A549 (cell line): ENCODE measurements at regions of chr11 and their contacts with region 1.

Region 1: DNA sequence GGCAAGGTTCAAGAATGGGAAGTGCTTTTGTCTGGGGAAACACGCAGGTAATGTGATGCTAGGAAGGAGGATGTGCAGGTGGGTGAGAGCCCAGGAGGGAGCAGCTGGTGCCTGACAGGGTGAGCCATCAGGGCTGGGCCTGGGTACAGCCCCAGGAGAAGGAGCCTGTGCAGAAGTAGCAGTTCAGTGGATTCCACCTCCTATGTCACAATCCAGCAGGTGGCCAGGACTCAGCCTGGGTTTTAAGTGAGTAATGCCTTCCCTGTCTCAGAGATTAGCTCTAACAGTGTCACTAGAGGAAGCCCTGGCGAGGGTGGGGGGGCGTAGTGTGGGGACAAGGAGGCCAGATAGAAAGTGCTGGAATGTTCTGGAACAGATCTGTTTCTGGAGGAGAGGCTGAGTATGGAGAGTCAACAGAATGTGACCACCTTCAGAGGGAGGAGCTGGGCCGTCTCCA is 8.1 kb downstream of the RIC8A start:
- DNase-seq: no peak
- ATAC-seq: peak; percentile 20 to 42; a peak in 5 of 6 replicates
- H3K4me3 ChIP-seq: no peak overlapping the region
- H3K27ac ChIP-seq: no peak overlapping the region
- H3K4me1 ChIP-seq: peaks cover 3% of the 10 kb centered on the region; the same call in 2 of the 3 replicates
- CTCF ChIP-seq: no peak
- EP300 ChIP-seq: no peak
- POLR2A ChIP-seq: no peak
- RAD21 ChIP-seq: no peak

Region 2: GRCh38 chr11:200224-201003 is 15.2 kb before region 1 on chr11:
- CTCF ChIA-PET with region 1: no interaction called
- POLR2A ChIA-PET with region 1: no interaction called
- DNase-seq: no peak
- ATAC-seq: no peak
- H3K4me3 ChIP-seq: no peak overlapping the region
- H3K27ac ChIP-seq: no peak overlapping the region
- H3K4me1 ChIP-seq: peaks cover under 1% of the 10 kb centered on the region; the same call in 1 of the 3 replicates
- CTCF ChIP-seq: no peak
- EP300 ChIP-seq: no peak
- POLR2A ChIP-seq: no peak
- RAD21 ChIP-seq: no peak

Region 3: DNA sequence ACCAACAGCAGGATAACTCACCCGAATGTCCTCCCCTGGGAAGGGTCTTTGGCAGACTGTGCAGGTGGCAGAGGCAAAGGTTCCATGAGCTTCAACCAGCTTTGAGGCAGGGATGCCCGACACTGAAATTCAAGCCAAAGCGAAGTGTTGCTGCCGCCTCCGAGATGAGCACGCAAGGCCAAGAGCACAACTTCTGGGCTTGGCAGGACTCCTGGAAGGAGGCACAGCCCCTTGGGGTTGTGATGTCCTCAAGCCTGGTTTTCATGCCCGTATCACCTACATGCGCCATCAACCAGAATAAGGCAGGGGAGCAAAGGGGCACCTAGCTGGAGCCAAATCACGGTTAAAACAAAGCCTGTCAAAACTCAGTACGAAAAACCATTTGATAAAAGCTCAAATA is 14.8 kb after region 1 on chr11:
- CTCF ChIA-PET with region 1: interaction called, 11 read pairs
- POLR2A ChIA-PET with region 1: no interaction called
- DNase-seq: no peak
- ATAC-seq: no peak
- H3K4me3 ChIP-seq: no peak overlapping the region
- H3K27ac ChIP-seq: no peak overlapping the region
- H3K4me1 ChIP-seq: peaks cover 7% of the 10 kb centered on the region; the same call in 2 of the 3 replicates
- CTCF ChIP-seq: no peak
- EP300 ChIP-seq: no peak
- POLR2A ChIP-seq: no peak
- RAD21 ChIP-seq: no peak

Region 4: DNA sequence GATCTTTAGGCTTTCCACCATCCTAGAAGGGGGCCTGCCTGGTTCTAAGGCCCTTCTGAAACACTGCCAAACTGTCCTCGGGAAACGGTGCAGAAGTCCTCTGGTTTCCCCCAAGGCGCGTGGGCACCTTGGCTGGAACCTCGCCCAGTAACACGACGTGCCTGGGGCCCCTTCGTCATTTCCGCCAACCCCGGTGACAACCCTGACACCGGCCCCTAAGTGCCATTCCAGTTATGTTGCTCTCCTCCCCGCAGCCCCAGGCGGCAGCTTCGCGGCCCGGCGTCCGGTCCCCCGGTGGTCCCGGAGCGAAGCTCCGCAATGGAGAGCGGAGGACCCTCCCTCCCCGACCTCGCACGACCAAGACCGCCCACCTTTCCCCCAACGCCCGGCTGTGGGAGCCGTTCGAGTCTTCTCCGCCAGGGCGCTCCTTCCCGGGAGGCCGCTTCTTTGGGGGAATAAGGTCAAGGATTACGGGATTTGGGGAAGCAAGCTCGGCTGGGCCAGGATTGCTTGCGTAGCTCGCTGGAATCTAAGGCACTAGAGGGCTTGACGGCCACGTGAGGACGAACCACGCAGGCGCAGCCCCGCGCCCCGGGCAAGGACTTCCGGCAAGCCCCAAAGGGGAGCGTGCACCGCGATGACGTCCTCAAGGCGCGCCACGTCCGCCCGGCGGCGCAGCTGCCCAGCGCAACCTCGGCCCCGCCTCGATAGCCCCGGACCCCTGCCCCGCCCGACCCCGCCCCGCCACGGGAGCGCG is 290.8 kb after region 1 on chr11:
- CTCF ChIA-PET with region 1: no interaction called
- POLR2A ChIA-PET with region 1: no interaction called
- DNase-seq: peak; percentile 96 to 99
- ATAC-seq: peak; percentile 77 to 83
- H3K4me3 ChIP-seq: peak overlapping the region; percentile 83
- H3K27ac ChIP-seq: peak overlapping the region; percentile 97
- H3K4me1 ChIP-seq: peaks cover 15% of the 10 kb centered on the region; the same call in 2 of the 3 replicates
- CTCF ChIP-seq: no peak
- EP300 ChIP-seq: no peak
- POLR2A ChIP-seq: no peak; the same call in 1 of the 2 replicates
- RAD21 ChIP-seq: no peak